Naive thymus-derived CD4-positive, alpha-beta T cell (primary cell): ENCODE measurements at regions of chr4 and their contacts with region 1.

Region 1: DNA sequence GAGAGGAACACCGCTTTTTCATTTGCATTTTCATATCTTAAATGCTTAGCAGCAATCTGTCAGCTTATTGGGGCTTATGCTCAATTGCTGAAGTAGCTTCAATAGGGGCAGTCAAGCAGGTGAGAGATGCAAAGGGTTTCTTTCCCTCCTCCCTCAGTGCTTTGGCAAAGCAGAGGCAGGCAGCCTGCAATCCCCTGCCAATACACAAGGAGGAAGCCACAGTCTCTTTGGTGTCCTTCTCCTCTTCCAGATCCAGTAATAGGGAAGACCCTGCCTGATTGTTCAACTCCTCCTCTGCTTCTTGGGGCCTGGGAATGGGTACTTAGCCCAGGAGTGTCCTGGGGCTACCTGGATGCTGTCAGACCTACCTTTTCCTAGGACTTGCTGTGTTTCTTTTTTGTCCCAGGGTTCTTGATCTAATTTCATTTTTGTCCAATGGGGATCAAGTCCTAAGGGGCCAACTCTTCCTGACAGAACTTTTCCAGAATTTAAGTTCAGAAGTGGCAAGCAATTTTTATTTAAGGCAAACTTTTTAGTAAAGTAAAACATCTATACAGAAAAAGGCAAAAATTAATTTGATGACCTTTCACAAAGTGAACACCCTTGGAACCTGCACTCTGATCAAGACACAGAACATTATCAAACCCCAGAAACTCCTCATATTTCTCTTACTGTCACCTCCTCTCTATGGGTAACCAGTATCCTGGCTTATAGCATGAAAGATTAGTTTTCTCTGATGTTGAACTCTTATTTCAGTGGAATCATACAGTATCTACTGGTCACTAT is 260.3 kb downstream of the PPP3CA start:
- DNase-seq: no peak
- ATAC-seq: no peak
- H3K4me3 ChIP-seq: no peak overlapping the region
- H3K4me3 Mint-ChIP-seq: no peak overlapping the region
- H3K27ac ChIP-seq: no peak overlapping the region
- H3K27ac Mint-ChIP-seq: peak overlapping the region in 1 of 9 donors; percentile 4
- H3K4me1 ChIP-seq: no peaks in the 10 kb centered on the region
- H3K4me1 Mint-ChIP-seq: peaks cover 0 to 5% (median 0%) of the 10 kb centered on the region in 7 donors
- H3K27me3 ChIP-seq: no peaks in the 10 kb centered on the region
- H3K27me3 Mint-ChIP-seq: no peaks in the 10 kb centered on the region

Region 2: GRCh38 chr4:101123231-101123630 is 36.2 kb after region 1 on chr4:
- CTCF ChIA-PET with region 1: no interaction called
- POLR2A ChIA-PET with region 1: no interaction called
- intact Hi-C with region 1: loop called in 1 of 2 experiments (anchors 5 kb)
- DNase-seq: peak in 1 of 9 donors; percentile 2
- ATAC-seq: no peak
- H3K4me3 ChIP-seq: no peak overlapping the region
- H3K4me3 Mint-ChIP-seq: no peak overlapping the region
- H3K27ac ChIP-seq: no peak overlapping the region
- H3K27ac Mint-ChIP-seq: no peak overlapping the region
- H3K4me1 ChIP-seq: no peaks in the 10 kb centered on the region
- H3K4me1 Mint-ChIP-seq: peaks cover 4 to 40% (median 19%) of the 10 kb centered on the region in 7 donors
- H3K27me3 ChIP-seq: no peaks in the 10 kb centered on the region
- H3K27me3 Mint-ChIP-seq: no peaks in the 10 kb centered on the region